Calu3 (cell line): ENCODE measurements at regions of chr3 and their contacts with region 1.

Region 1: DNA sequence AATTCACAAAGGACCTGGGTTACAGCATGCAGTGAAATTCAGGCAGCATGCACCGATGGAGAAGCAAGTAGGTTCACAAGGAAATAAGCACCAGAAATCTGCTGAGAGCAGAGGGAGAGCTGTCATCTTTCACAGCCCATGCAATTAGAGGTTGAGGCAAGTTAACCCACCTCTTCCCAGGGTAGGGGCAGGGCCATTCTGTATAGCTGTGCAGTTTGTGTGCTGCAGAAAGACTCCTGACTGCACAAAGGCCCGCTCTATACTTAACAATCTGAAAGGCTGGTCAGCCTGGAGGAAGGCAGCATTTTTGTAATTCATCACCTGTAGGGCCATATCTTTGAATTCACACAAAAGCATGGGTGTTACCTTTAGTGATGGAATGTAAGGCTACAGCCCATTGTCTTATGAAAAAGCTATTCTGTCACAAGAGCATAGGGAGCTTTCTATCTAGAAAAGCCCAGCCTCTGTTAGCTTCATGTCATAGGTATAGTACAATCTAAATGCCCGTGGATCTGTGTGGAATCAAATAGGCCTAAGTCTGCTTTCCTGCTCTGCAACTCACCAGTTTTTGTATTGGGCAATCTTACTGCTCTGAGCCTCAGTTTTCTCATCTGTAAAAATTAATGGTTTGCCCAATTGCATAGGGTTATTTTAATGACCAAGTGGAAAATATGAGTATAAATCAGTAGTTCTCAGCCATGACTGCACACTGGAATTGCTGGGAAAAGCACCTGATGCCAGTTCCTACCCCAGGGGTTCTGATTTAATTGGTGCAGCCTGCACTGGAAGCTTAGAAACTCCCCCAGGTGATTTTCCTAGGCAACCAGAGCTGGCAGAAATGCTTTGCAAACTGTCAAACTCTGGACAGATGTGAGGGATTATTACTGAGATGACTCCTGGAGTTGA is 65.2 kb downstream of the ATP13A5 start:
- DNase-seq: no peak
- H3K4me3 Mint-ChIP-seq: no peak overlapping the region
- H3K27ac Mint-ChIP-seq: no peak overlapping the region
- H3K4me1 Mint-ChIP-seq: no peaks in the 10 kb centered on the region
- H3K27me3 Mint-ChIP-seq: no peaks in the 10 kb centered on the region
- CTCF ChIP-seq: no peak

Region 2: GRCh38 chr3:192194085-192194484 is 1119.2 kb before region 1 on chr3:
- CTCF ChIA-PET with region 1: interaction called, 11 read pairs
- intact Hi-C with region 1: no loop called
- DNase-seq: no peak
- H3K4me3 Mint-ChIP-seq: no peak overlapping the region
- H3K27ac Mint-ChIP-seq: no peak overlapping the region
- H3K4me1 Mint-ChIP-seq: no peaks in the 10 kb centered on the region
- H3K27me3 Mint-ChIP-seq: no peaks in the 10 kb centered on the region
- CTCF ChIP-seq: no peak

Region 3: DNA sequence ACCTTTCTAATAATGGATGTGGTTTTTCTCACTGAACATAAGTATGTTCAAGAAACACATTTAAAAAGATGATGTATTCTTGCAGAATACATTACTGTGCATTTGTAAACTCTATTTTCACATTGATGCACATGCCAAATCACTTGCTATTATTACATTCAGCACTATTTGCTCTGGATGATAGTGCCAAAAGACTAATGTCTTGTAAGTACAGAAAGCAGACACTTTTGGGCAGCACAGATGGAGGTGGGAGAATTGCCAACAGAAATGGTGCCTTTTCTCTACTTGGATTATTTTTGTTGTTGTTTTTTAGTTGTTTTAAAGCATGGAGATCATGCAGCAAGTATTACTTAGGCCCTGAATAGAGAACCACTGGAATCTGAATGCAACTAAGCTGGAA is 575.8 kb before region 1 on chr3:
- CTCF ChIA-PET with region 1: no interaction called
- intact Hi-C with region 1: no loop called
- DNase-seq: no peak
- H3K4me3 Mint-ChIP-seq: no peak overlapping the region
- H3K27ac Mint-ChIP-seq: no peak overlapping the region
- H3K4me1 Mint-ChIP-seq: no peaks in the 10 kb centered on the region
- H3K27me3 Mint-ChIP-seq: peaks cover 19% of the 10 kb centered on the region
- CTCF ChIP-seq: no peak

Region 4: GRCh38 chr3:193452338-193452737 is 139.0 kb after region 1 on chr3:
- CTCF ChIA-PET with region 1: no interaction called
- intact Hi-C with region 1: no loop called
- DNase-seq: no peak
- H3K4me3 Mint-ChIP-seq: no peak overlapping the region
- H3K27ac Mint-ChIP-seq: no peak overlapping the region
- H3K4me1 Mint-ChIP-seq: no peaks in the 10 kb centered on the region
- H3K27me3 Mint-ChIP-seq: no peaks in the 10 kb centered on the region
- CTCF ChIP-seq: peak; percentile 44

Region 5: DNA sequence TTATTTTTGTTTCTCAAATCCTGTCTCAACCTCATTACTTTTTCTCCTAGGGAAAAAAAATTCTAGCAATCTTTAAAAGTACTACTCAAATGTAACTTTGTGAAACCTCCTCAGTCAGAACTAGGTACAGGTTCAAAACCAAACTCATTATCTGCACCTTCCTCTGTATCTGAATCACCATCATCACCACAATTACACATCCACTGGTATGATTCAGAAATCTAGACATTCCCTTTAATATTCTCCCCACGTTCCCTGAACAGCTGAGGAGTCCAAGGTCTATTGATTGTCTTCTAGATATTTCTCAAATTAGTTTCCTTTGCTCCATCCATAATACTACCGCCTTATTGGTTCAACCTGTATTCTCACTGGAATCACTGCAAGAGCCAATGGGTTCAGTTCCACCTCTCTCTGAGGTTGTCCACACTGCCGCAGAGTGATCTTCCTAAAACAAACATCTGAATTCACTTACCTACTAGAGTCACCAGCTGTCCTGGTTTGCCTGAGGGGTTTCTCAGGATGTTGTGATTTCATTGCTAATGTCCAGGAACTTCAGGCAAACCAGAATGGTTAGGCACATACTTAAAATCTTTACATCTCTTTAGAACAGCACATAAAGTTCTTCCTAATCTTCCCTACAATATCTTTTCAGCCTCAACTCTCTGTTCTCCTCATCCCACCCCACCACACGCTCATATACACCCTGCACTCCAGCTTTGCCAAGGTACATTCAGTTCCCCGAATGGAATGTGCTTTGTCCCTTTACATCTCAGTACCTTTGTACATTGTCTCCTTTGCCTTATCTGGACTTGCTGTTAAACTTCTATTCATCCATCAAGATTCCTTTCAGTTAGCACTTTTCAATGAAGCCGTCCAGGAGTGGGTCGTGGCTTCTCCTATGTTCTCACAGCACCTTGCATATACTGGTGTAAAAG is 217.2 kb after region 1 on chr3:
- CTCF ChIA-PET with region 1: no interaction called
- intact Hi-C with region 1: no loop called
- DNase-seq: no peak
- H3K4me3 Mint-ChIP-seq: no peak overlapping the region
- H3K27ac Mint-ChIP-seq: no peak overlapping the region
- H3K4me1 Mint-ChIP-seq: peaks cover 6% of the 10 kb centered on the region
- H3K27me3 Mint-ChIP-seq: no peaks in the 10 kb centered on the region
- CTCF ChIP-seq: no peak

Region 6: DNA sequence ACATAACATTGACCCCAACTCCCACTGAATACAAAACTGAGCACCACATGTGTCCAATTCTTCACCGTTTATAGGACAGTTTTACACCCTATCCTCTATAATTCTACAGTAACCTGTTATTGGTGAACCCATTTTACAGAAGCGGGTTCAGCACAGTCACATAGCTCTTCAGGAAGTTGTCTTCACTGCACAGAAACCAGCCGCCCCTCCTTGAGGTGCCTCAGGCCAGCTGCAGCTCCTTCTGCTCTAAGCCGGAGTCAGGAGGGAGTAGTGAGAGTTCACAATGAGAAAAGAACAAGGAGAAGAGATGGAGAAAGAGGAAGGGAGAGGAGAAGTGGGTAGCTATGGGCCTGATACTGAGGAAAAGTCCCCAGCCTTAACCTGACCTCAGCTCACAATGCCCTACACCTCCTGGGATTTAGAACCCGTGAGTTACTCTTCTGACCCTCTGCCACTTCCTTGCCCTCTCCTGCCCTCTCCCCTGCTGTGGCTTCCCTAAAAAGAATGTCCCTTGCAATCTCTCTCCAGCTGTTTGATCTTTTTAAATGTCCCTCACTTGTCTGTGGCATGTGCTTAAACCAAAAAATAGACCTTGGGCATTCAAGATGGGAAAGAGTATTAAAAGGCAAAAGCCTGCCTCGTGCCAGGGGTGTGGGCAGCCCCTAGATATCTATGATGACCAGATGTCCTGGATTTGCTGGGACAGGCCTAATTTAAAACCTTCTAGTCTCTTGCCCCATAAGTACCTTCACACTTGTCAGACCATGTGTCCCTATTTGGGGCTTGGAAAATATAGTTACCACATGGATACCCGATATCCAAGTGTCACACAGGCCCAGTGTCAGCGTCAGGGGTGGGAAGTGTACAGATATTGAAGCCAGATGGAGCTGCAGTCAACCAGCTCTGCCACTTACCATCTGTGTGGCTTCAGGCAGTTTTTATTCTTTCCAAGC is 751.4 kb after region 1 on chr3:
- CTCF ChIA-PET with region 1: no interaction called
- intact Hi-C with region 1: no loop called
- DNase-seq: no peak
- H3K4me3 Mint-ChIP-seq: no peak overlapping the region
- H3K27ac Mint-ChIP-seq: no peak overlapping the region
- H3K4me1 Mint-ChIP-seq: peaks cover 42% of the 10 kb centered on the region
- H3K27me3 Mint-ChIP-seq: no peaks in the 10 kb centered on the region
- CTCF ChIP-seq: no peak